ENCODE measurements at regions of chr1 and their contacts with region 1.

Region 1: DNA sequence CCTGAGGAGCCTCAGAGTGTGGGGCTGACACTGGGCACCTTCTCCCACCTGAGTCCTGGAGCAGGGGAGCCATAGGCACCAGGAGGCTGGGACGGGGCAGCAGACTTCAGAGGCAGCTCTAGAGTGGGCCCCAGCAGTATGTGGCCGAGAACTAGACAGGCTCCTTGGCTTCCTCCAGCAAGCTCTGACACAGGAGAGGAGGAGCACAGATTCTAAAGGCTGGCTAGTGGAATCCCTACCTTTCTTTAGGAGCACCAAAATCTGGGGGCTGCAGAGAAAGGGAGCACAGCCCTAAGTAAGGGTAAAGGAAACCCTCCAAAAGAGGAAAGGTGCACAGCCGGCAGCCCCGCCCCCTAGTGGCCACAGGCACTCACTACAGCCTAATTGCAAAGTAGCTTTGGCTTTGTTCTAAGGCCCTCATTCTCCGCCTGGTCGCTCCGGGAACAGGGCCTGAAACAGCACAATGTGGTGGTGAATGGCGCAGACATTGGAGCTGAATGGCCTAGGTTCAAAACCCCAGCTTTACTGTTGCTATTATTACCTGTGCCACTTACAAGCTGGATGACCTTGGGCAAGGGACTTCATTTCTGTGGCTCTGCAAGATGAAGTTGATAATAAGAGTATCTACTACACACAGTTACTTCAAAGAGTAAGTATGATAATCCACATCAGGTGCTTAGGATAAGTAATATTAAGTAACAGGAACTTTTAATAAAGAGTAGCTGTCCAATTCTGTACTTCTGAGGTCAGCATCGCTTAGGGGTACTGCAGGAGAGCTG is 8.8 kb upstream of the GUCA2A start:
- DNase-seq: peak; percentile 28 to 42
- ATAC-seq: peak; percentile 54 to 76; a peak in 5 of 6 replicates
- H3K4me3 ChIP-seq: no peak overlapping the region
- H3K27ac ChIP-seq: no peak overlapping the region
- H3K4me1 ChIP-seq: peaks cover 2% of the 10 kb centered on the region; the same call in 2 of the 3 replicates
- CTCF ChIP-seq: peak; percentile 75
- EP300 ChIP-seq: no peak
- POLR2A ChIP-seq: no peak
- RAD21 ChIP-seq: peak; percentile 54 to 57

Region 2: GRCh38 chr1:41573785-41574713 is 599.3 kb before region 1 on chr1:
- CTCF ChIA-PET with region 1: interaction called, 28 read pairs
- POLR2A ChIA-PET with region 1: no interaction called
- DNase-seq: peak; percentile 62 to 65
- ATAC-seq: peak; percentile 94 to 97
- H3K4me3 ChIP-seq: no peak overlapping the region
- H3K27ac ChIP-seq: peak overlapping the region in 1 of 2 experiments; percentile 48; a peak in 1 of 6 replicates
- H3K4me1 ChIP-seq: no peaks in the 10 kb centered on the region
- CTCF ChIP-seq: peak; percentile 79
- EP300 ChIP-seq: no peak
- POLR2A ChIP-seq: no peak
- RAD21 ChIP-seq: peak; percentile 91 to 93

Region 3: GRCh38 chr1:42146626-42147320 is 26.6 kb before region 1 on chr1:
- CTCF ChIA-PET with region 1: interaction called, 70 read pairs
- POLR2A ChIA-PET with region 1: no interaction called
- DNase-seq: peak; percentile 60 to 71
- ATAC-seq: peak; percentile 79 to 89
- H3K4me3 ChIP-seq: no peak overlapping the region
- H3K27ac ChIP-seq: no peak overlapping the region
- H3K4me1 ChIP-seq: peaks cover under 1% of the 10 kb centered on the region; the same call in 1 of the 3 replicates
- CTCF ChIP-seq: peak; percentile 82
- EP300 ChIP-seq: no peak
- POLR2A ChIP-seq: no peak
- RAD21 ChIP-seq: peak; percentile 86 to 89

Region 4: GRCh38 chr1:42157667-42158066 is 15.7 kb before region 1 on chr1:
- CTCF ChIA-PET with region 1: interaction called, 56 read pairs
- POLR2A ChIA-PET with region 1: no interaction called
- DNase-seq: peak in 1 of 2 experiments; percentile 29
- ATAC-seq: peak; percentile 36 to 63; a peak in 5 of 6 replicates
- H3K4me3 ChIP-seq: no peak overlapping the region
- H3K27ac ChIP-seq: no peak overlapping the region
- H3K4me1 ChIP-seq: no peaks in the 10 kb centered on the region
- CTCF ChIP-seq: no peak
- EP300 ChIP-seq: no peak
- POLR2A ChIP-seq: no peak
- RAD21 ChIP-seq: peak in 1 of 2 experiments; percentile 15; a peak in 1 of 5 replicates

Region 5: DNA sequence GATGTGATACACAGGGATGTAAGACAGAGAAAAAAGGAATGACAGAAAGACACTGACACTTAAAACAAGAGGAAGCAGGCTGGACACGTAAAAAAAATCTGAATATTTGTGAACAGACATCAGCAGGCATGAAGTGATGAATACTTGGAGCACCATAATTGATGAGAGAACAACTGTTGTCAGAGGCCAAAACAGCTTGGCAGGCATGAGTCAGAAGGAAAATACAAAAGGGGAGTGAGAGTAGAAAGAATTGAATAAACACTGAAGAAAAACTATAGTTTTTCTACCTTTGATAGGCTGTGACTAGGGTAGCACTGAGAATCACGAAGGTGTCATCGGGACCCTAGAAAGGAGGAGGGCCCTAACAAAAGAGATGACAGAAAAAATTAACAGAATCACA is 12.8 kb after region 1 on chr1:
- CTCF ChIA-PET with region 1: interaction called, 29 read pairs
- POLR2A ChIA-PET with region 1: no interaction called
- DNase-seq: no peak
- ATAC-seq: no peak
- H3K4me3 ChIP-seq: no peak overlapping the region
- H3K27ac ChIP-seq: no peak overlapping the region
- H3K4me1 ChIP-seq: no peaks in the 10 kb centered on the region
- CTCF ChIP-seq: no peak
- EP300 ChIP-seq: no peak
- POLR2A ChIP-seq: no peak
- RAD21 ChIP-seq: no peak

Region 6: GRCh38 chr1:42541104-42541503 is 367.8 kb after region 1 on chr1:
- CTCF ChIA-PET with region 1: no interaction called
- POLR2A ChIA-PET with region 1: no interaction called
- DNase-seq: no peak
- ATAC-seq: no peak
- H3K4me3 ChIP-seq: no peak overlapping the region
- H3K27ac ChIP-seq: no peak overlapping the region
- H3K4me1 ChIP-seq: no peaks in the 10 kb centered on the region
- CTCF ChIP-seq: no peak
- EP300 ChIP-seq: no peak
- POLR2A ChIP-seq: no peak
- RAD21 ChIP-seq: no peak